Activated CD8-positive, alpha-beta T cell treated with anti-CD3 and anti-CD28 coated beads, Interleukin-2, amount 10 ng/mL, durations not matched to agents 7 days and 5 days (primary cell): ENCODE measurements at regions of chr16 and their contacts with region 1.

Region 1: GRCh38 chr16:89700100-89700648 is 1.3 kb downstream of the SPATA2L start:
- DNase-seq: peak; percentile 97
- ATAC-seq: peak; percentile 32
- H3K4me3 Mint-ChIP-seq: peak overlapping the region; percentile 76
- H3K27ac Mint-ChIP-seq: peak overlapping the region; percentile 77
- H3K4me1 Mint-ChIP-seq: peaks cover 39% of the 10 kb centered on the region
- H3K27me3 Mint-ChIP-seq: no peaks in the 10 kb centered on the region

Region 2: GRCh38 chr16:89657442-89658220 is 42.5 kb before region 1 on chr16 and contains the starts of genes CHMP1A and SPATA33:
- CTCF ChIA-PET with region 1: interaction called, 13 read pairs
- POLR2A ChIA-PET with region 1: no interaction called
- DNase-seq: peak; percentile 93
- ATAC-seq: peak; percentile 93
- H3K4me3 Mint-ChIP-seq: peak within 1 kb of the TSS; percentile 84
- H3K27ac Mint-ChIP-seq: peak within 1 kb of the TSS; percentile 78
- H3K4me1 Mint-ChIP-seq: peaks cover 43% of the 10 kb centered on the region
- H3K27me3 Mint-ChIP-seq: no peaks in the 10 kb centered on the region
- total RNA-seq, gene CHMP1A: 95.7 to 98.9 TPM
- total RNA-seq, gene SPATA33: 13.2 to 16.1 TPM

Region 3: GRCh38 chr16:89711601-89712273 is 11.6 kb after region 1 on chr16:
- CTCF ChIA-PET with region 1: interaction called, 14 read pairs
- POLR2A ChIA-PET with region 1: no interaction called
- DNase-seq: peak; percentile 80
- ATAC-seq: peak; percentile 90
- H3K4me3 Mint-ChIP-seq: peak overlapping the region; percentile 78
- H3K27ac Mint-ChIP-seq: peak overlapping the region; percentile 64
- H3K4me1 Mint-ChIP-seq: peaks cover 10% of the 10 kb centered on the region
- H3K27me3 Mint-ChIP-seq: no peaks in the 10 kb centered on the region

Region 4: GRCh38 chr16:89737341-89738071 is 37.3 kb after region 1 on chr16:
- CTCF ChIA-PET with region 1: interaction called, 21 read pairs
- POLR2A ChIA-PET with region 1: no interaction called
- DNase-seq: peak; percentile 70
- ATAC-seq: peak; percentile 63
- H3K4me3 Mint-ChIP-seq: peak overlapping the region; percentile 15
- H3K27ac Mint-ChIP-seq: peak overlapping the region; percentile 71
- H3K4me1 Mint-ChIP-seq: peaks cover 32% of the 10 kb centered on the region
- H3K27me3 Mint-ChIP-seq: no peaks in the 10 kb centered on the region

Region 5: DNA sequence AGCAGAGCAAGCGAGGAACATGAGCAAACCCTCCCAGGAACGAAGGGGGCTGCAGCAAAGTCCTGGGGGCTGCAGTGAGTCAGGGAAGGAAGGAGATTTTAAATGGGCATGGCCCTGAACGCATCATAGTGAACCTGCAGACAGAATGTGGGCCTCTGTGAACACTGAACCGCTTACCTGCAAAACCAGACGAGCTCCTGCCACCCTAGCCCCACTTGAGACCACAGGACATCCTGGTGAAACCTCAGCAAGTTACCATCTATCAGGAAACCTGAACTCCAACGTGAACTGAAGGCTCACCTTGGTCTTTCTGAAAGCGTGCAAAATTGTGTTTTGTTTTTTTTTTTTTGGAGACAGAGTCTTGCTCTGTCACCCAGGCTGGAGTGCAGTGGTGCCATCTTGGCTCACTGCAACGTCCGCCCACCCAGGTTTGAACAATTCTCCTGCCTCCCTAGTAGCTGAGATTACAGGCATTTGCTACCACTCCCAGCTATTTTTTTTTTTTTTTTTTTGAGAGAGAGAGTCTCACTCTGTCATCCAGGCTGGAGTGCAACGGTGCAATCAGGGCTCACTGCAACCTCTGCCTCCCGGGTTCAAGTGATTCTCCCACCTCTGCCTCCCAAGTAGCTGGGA is 85.5 kb after region 1 on chr16:
- CTCF ChIA-PET with region 1: interaction called, 116 read pairs
- POLR2A ChIA-PET with region 1: no interaction called
- DNase-seq: peak; percentile 70
- ATAC-seq: peak; percentile 83
- H3K4me3 Mint-ChIP-seq: peak overlapping the region; percentile 25
- H3K27ac Mint-ChIP-seq: peak overlapping the region; percentile 32
- H3K4me1 Mint-ChIP-seq: peaks cover 33% of the 10 kb centered on the region
- H3K27me3 Mint-ChIP-seq: no peaks in the 10 kb centered on the region

Region 6: DNA sequence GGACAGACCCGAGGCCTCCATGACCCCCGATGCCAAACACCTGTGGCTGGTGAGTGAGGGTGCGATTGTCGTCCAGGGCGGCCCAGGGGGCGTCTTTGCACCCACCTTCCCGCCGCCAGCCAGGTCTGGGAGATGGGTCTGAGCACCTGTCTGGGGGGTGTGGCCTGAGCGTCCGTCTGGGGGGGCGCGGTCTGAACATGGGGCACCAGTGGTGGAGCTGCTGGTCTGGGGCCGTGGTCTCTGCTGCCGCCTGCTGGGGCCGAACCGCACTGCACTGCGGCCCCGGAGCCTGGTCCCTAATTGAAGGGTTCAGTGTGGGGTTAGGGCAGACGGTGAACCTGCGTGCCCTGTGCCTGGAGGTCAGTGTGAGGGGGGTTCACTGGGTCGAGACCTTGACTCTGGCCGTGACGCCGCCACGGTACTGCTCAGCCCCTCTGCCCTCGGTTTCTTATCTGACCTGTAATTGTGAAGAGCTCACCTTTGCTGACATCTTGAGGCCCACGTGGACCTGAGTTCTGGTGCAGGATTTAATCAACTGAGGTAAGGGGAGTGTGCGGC is 160.7 kb after region 1 on chr16:
- CTCF ChIA-PET with region 1: interaction called, 88 read pairs
- POLR2A ChIA-PET with region 1: interaction called, 3 read pairs
- DNase-seq: peak; percentile 82
- ATAC-seq: peak; percentile 81
- H3K4me3 Mint-ChIP-seq: no peak overlapping the region
- H3K27ac Mint-ChIP-seq: no peak overlapping the region
- H3K4me1 Mint-ChIP-seq: peaks cover 32% of the 10 kb centered on the region
- H3K27me3 Mint-ChIP-seq: no peaks in the 10 kb centered on the region

Region 7: GRCh38 chr16:89909777-89910716 is 209.9 kb after region 1 on chr16:
- CTCF ChIA-PET with region 1: interaction called, 28 read pairs
- POLR2A ChIA-PET with region 1: no interaction called
- DNase-seq: peak; percentile 75
- ATAC-seq: peak; percentile 83
- H3K4me3 Mint-ChIP-seq: no peak overlapping the region
- H3K27ac Mint-ChIP-seq: no peak overlapping the region
- H3K4me1 Mint-ChIP-seq: peaks cover 14% of the 10 kb centered on the region
- H3K27me3 Mint-ChIP-seq: no peaks in the 10 kb centered on the region